ENCODE measurements at regions of chr12 and their contacts with region 1.

Region 1: DNA sequence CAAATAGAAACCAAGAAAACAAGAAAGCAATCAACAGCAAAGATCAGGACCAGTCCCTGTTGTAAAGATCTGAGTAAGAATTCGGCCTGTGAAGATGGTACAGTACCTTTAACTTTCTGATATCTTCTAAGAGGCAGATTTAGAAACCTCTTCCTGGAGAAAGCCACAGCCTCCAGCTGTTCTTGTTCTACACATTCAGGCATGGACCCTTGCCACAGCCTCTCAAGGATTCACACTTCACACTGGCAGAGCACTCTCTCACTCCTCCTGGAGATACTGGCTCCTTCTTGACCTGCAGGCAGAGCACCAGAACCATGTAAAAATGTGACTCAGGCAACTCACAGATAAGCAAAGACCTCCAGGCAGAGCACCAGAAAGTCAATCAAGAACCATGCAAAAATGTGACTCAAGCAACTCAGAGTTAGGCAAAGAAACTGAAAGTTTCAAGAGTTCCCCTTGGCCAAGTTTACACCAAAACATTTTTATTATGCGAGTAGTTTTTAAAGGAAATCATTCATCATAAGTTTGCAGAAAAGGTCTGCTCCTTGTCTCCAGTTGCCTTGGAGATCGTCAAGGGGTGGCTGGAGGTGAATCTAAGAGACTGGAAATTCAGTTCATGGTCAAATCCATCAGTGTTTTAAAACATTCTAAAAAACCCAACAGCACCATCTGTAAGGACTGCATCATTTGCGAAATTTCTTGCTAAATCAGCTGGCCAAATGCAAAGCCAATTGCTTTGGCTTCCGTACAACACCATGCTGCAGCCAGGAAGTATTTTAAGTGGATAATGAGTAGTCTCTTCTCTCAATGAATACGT is 119.3 kb upstream of the MDM1 start:
- DNase-seq: peak; percentile 64
- H3K4me3 Mint-ChIP-seq: peak overlapping the region; percentile 67
- H3K27ac Mint-ChIP-seq: peak overlapping the region; percentile 96
- H3K4me1 Mint-ChIP-seq: peaks cover 93% of the 10 kb centered on the region
- H3K27me3 Mint-ChIP-seq: no peaks in the 10 kb centered on the region

Region 2: DNA sequence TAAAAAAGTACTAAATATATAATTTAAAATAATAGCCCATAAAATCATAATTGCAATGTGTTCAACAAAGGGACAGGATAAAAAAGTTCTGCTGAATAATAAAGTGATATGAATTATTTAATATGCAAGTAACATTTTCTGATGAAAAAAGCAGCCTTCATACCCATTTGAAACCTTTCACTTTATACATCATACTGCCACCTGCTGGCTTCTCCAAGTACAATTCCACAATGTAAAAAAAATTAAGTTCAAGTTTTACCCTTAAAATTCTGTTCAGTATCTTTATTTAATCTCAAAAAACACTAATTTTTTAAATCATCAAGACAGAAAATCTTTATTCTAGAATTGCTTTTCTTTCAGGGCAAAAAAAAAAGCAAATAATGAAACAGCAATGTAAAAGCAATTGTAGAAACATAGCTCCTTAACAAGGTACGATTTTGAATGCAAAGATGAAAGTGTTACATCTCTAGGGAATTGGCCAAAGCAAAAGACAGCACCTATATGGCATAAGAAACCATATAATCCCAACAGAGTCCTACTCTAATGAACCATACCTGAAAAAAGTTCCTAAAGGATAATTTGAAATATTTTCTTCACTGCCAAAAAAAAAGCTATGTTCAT is 134.3 kb before region 1 on chr12:
- CTCF ChIA-PET with region 1: no interaction called
- POLR2A ChIA-PET with region 1: no interaction called
- DNase-seq: peak; percentile 46
- H3K4me3 Mint-ChIP-seq: no peak overlapping the region
- H3K27ac Mint-ChIP-seq: no peak overlapping the region
- H3K4me1 Mint-ChIP-seq: peaks cover 5% of the 10 kb centered on the region
- H3K27me3 Mint-ChIP-seq: no peaks in the 10 kb centered on the region

Region 3: GRCh38 chr12:68462803-68463202 is 11.3 kb after region 1 on chr12:
- CTCF ChIA-PET with region 1: no interaction called
- POLR2A ChIA-PET with region 1: interaction called, 12 read pairs
- DNase-seq: no peak
- H3K4me3 Mint-ChIP-seq: peak overlapping the region; percentile 76
- H3K27ac Mint-ChIP-seq: peak overlapping the region; percentile 79
- H3K4me1 Mint-ChIP-seq: peaks cover 24% of the 10 kb centered on the region
- H3K27me3 Mint-ChIP-seq: no peaks in the 10 kb centered on the region

Region 4: GRCh38 chr12:68530965-68531364 is 79.5 kb after region 1 on chr12:
- CTCF ChIA-PET with region 1: no interaction called
- POLR2A ChIA-PET with region 1: no interaction called
- DNase-seq: no peak
- H3K4me3 Mint-ChIP-seq: no peak overlapping the region
- H3K27ac Mint-ChIP-seq: no peak overlapping the region
- H3K4me1 Mint-ChIP-seq: peaks cover 8% of the 10 kb centered on the region
- H3K27me3 Mint-ChIP-seq: peaks cover 9% of the 10 kb centered on the region